ENCODE measurements at regions of chr12 and their contacts with region 1.

Region 1: DNA sequence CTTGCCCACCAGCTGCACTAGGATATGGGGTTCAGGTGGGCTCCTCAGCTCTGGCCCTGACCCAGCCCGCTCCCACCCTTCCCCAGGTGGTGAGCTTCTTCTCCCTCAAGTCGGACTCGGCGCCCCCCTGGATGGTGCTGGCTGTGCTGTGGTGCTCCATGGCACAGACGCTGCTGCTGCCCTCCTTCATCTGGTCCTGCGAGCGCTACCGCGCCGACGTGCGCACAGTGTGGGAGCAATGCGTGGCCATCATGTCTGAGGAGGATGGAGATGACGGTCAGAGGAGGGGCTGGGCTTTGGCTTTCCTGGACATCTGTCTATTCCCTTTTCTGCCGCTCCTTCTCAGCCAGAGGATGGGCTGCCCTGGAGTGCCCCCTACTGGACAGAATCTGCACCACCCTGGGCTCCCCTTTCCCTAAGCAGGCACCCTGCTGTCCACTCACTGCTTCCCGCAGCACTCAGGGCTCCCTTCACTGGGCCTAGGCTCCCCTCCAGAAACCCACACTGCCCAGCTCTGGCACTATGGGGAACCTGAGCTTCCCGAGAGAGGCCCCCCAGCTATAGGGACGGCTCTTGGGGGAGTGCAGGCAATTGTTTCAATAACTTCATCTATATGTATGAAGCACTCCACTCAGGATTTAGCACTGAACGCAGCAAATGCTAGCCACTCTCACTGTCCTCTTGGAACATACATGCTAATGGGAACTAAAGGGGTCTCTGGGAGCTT is 2.6 kb upstream of the P3H3 start:
- DNase-seq: peak; percentile 61 to 98
- H3K4me3 ChIP-seq: peak overlapping the region; percentile 8 to 53 (median 28); a peak in 7 of 8 replicates
- H3K27ac ChIP-seq: no peak overlapping the region
- H3K4me1 ChIP-seq: peaks cover 8 to 45% (median 29%) of the 10 kb centered on the region in 4 experiments
- H3K27me3 ChIP-seq: peaks cover 0 to 12% (median 8%) of the 10 kb centered on the region in 4 experiments; a peak in 5 of 7 replicates
- CTCF ChIP-seq: peak in 2 of 3 experiments; percentile 91 to 95; a peak in 3 of 4 replicates
- EP300 ChIP-seq: no peak
- POLR2A ChIP-seq: no peak
- RAD21 ChIP-seq: peak; percentile 88 to 93

Region 2: DNA sequence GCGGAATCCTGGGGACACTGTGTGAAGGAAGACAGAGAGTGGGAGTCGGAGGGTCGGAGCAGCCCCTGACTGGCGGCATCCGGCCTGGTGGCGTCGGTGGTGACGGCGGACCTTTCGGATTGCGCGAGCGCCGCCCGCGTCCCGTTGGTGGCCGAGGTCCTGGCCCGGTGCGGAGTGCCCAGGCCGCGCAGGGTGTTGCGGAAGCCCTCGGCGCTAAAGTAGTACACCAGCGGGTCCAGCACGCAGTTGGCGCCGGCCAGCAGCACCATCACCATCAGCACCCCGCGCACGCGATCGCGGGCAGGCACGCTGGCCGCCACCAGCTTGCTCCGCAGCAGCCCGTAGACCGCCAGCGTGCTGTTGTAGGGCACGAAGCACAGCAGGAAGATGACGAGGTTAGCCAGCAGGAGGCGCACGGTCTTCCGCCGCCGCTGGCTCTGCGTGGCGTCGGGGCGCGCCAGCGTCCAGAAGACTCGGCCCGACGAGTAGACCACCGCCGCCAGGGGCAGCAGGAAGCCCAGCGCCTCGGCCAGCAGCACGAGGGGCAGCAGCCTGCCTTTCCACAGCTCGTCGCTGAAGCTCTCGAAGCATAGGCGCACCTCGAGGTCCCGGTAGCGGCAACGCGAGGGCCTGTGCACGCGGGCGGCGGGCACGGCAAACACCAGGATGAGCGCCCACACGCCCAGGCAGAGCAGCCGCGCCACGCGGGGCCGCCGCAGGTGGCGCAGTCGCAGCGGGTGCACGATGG is 205.2 kb before region 1 on chr12:
- CTCF ChIA-PET with region 1: interaction called, 16 read pairs
- POLR2A ChIA-PET with region 1: interaction called, 3 read pairs
- DNase-seq: peak; percentile 80 to 91
- H3K4me3 ChIP-seq: peak overlapping the region; percentile 11 to 52 (median 16); a peak in 6 of 8 replicates
- H3K27ac ChIP-seq: no peak overlapping the region
- H3K4me1 ChIP-seq: peaks cover 3 to 7% (median 6%) of the 10 kb centered on the region in 4 experiments; a peak in 6 of 7 replicates
- H3K27me3 ChIP-seq: peaks cover 4 to 27% (median 21%) of the 10 kb centered on the region in 4 experiments; a peak in 6 of 7 replicates
- CTCF ChIP-seq: peak; percentile 89 to 99 (median 92)
- EP300 ChIP-seq: 0 out of 3 replicates have a peak, but pooled peaks of 1 of the 2 experiments have one; percentile 40
- POLR2A ChIP-seq: peak in 1 of 2 experiments; percentile 68; a peak in 1 of 3 replicates
- RAD21 ChIP-seq: peak; percentile 53 to 67; a peak in 3 of 4 replicates

Region 3: GRCh38 chr12:6735448-6736191 is 89.9 kb before region 1 on chr12:
- CTCF ChIA-PET with region 1: interaction called, 16 read pairs
- POLR2A ChIA-PET with region 1: interaction called, 4 read pairs
- DNase-seq: peak in 1 of 2 experiments; percentile 62
- H3K4me3 ChIP-seq: no peak overlapping the region
- H3K27ac ChIP-seq: no peak overlapping the region
- H3K4me1 ChIP-seq: peaks cover 0 to 5% (median 0%) of the 10 kb centered on the region in 4 experiments; a peak in 1 of 7 replicates
- H3K27me3 ChIP-seq: no peaks in the 10 kb centered on the region
- CTCF ChIP-seq: peak; percentile 62 to 63 (median 63)
- EP300 ChIP-seq: no peak
- POLR2A ChIP-seq: no peak
- RAD21 ChIP-seq: peak; percentile 62 to 73

Region 4: DNA sequence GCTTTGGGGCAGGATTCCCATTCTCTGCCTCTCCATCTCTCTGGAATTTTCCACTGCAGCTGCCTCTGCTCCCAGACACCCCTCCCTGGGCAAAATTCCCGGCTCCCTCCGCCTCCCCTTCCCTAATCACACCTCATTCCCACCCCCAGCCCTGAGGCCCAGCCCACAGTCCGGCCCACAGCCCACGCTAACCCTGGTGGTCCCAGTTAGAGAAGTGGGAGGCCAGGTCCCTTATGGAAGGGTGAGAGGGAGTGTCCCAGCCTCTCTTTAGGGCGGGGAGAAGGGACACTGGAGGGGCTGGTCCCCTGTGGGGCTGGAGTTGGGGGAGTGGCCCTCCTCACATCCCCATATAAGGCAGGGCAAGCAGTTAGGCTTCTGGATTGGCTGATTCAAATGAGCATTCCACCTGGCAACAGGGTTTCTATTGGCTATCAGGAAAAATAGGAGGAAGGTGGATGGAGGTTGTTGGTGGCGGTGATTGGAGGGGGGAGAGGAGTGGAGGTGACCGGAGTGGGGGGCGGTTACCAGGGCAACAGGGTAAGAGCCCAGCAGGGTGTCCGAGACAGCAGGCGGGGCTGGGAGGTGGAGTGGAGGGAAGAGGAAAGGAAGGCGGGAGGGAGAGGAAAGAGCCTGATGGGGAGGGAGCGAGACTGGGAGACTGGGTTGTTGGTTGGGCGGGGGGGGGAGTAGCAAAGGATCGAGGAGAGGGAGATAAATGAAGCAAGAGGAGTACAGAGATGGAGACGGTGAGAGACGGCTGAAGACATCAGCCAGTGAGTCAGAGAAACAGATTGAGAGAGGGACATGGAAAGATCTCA is 61.3 kb before region 1 on chr12:
- CTCF ChIA-PET with region 1: interaction called, 532 read pairs
- POLR2A ChIA-PET with region 1: interaction called, 56 read pairs
- DNase-seq: peak; percentile 91 to 94
- H3K4me3 ChIP-seq: peak overlapping the region in 2 of 4 experiments; percentile 6 to 98; a peak in 4 of 8 replicates
- H3K27ac ChIP-seq: peak overlapping the region; percentile 77
- H3K4me1 ChIP-seq: peaks cover 8 to 21% (median 14%) of the 10 kb centered on the region in 4 experiments
- H3K27me3 ChIP-seq: no peaks in the 10 kb centered on the region
- CTCF ChIP-seq: no peak
- EP300 ChIP-seq: peak in 1 of 2 experiments; percentile 57; a peak in 1 of 3 replicates
- POLR2A ChIP-seq: peak in 1 of 2 experiments; percentile 33; a peak in 1 of 3 replicates
- RAD21 ChIP-seq: no peak

Region 5: GRCh38 chr12:6778574-6779550 is 46.7 kb before region 1 on chr12:
- CTCF ChIA-PET with region 1: interaction called, 532 read pairs
- POLR2A ChIA-PET with region 1: interaction called, 13 read pairs
- DNase-seq: peak; percentile 82 to 96
- H3K4me3 ChIP-seq: peak overlapping the region; percentile 29 to 67 (median 54)
- H3K27ac ChIP-seq: no peak overlapping the region
- H3K4me1 ChIP-seq: peaks cover 5 to 18% (median 13%) of the 10 kb centered on the region in 4 experiments
- H3K27me3 ChIP-seq: peaks cover 0 to 23% (median 17%) of the 10 kb centered on the region in 4 experiments; a peak in 5 of 7 replicates
- CTCF ChIP-seq: peak in 2 of 3 experiments; percentile 95 to 98; a peak in 3 of 4 replicates
- EP300 ChIP-seq: peak in 1 of 2 experiments; percentile 17; a peak in 1 of 3 replicates
- POLR2A ChIP-seq: no peak
- RAD21 ChIP-seq: peak; percentile 96 to 99

Region 6: GRCh38 chr12:6851921-6852650 is 26.5 kb after region 1 on chr12 and contains the start of gene USP5:
- CTCF ChIA-PET with region 1: interaction called, 292 read pairs
- POLR2A ChIA-PET with region 1: interaction called, 388 read pairs
- DNase-seq: peak; percentile 94 to 99
- H3K4me3 ChIP-seq: peak within 1 kb of the TSS; percentile 79 to 94 (median 88)
- H3K27ac ChIP-seq: peak within 1 kb of the TSS; percentile 77; the same call in 1 of the 2 replicates
- H3K4me1 ChIP-seq: peaks cover 0 to 14% (median 3%) of the 10 kb centered on the region in 4 experiments; a peak in 5 of 7 replicates
- H3K27me3 ChIP-seq: no peaks in the 10 kb centered on the region
- CTCF ChIP-seq: no peak
- EP300 ChIP-seq: no peak
- POLR2A ChIP-seq: peak in 1 of 2 experiments; percentile 79; a peak in 2 of 3 replicates
- RAD21 ChIP-seq: no peak
- total RNA-seq, gene USP5: 148 and 159 TPM in 2 replicates

Measured in H1 (cell line).